CD8-positive, alpha-beta T cell (primary cell): ENCODE measurements at regions of chr10 and their contacts with region 1.

Region 1: DNA sequence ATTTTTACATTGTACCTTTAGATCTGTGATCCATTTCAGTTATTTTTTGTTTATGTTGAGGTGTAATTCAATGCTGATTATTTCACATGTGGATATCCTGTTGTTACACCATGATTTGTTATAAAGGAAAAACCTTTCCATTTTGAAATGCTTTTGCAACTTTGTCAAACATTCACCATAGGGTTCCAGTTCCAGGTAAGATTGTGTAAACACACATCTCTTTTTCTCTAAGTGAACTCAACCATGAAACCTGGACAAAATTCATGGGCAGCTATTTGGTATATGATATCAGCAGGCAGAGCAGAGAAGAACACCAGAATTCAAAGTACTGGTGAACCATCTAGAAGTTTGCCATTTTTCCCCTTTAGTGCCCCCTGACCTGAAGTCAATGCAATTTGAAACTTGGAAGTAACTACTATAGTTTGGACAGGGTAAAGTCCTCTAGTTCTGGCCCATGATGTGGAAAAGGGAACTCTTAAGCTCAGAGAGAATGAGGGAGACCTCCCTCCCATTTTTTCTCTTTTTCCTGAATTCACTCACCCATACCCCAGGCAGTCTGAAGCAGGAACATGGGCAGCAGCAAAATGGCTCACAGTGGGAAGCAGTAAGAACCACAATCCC is 446.1 kb downstream of the ATRNL1 start:
- DNase-seq: no peak
- ATAC-seq: no peak
- H3K4me3 ChIP-seq: no peak overlapping the region
- H3K4me3 Mint-ChIP-seq: no peak overlapping the region
- H3K27ac ChIP-seq: no peak overlapping the region
- H3K27ac Mint-ChIP-seq: no peak overlapping the region
- H3K4me1 ChIP-seq: no peaks in the 10 kb centered on the region
- H3K4me1 Mint-ChIP-seq: no peaks in the 10 kb centered on the region
- H3K27me3 ChIP-seq: no peaks in the 10 kb centered on the region
- H3K27me3 Mint-ChIP-seq: no peaks in the 10 kb centered on the region
- CTCF ChIP-seq: no peak

Region 2: GRCh38 chr10:115593060-115593459 is 53.8 kb after region 1 on chr10:
- CTCF ChIA-PET with region 1: no interaction called
- POLR2A ChIA-PET with region 1: no interaction called
- intact Hi-C with region 1: loop called in 1 of 2 experiments (anchors 2 kb)
- DNase-seq: no peak
- ATAC-seq: no peak
- H3K4me3 ChIP-seq: no peak overlapping the region
- H3K4me3 Mint-ChIP-seq: no peak overlapping the region
- H3K27ac ChIP-seq: no peak overlapping the region
- H3K27ac Mint-ChIP-seq: no peak overlapping the region
- H3K4me1 ChIP-seq: no peaks in the 10 kb centered on the region
- H3K4me1 Mint-ChIP-seq: no peaks in the 10 kb centered on the region
- H3K27me3 ChIP-seq: no peaks in the 10 kb centered on the region
- H3K27me3 Mint-ChIP-seq: no peaks in the 10 kb centered on the region
- CTCF ChIP-seq: no peak

Region 3: DNA sequence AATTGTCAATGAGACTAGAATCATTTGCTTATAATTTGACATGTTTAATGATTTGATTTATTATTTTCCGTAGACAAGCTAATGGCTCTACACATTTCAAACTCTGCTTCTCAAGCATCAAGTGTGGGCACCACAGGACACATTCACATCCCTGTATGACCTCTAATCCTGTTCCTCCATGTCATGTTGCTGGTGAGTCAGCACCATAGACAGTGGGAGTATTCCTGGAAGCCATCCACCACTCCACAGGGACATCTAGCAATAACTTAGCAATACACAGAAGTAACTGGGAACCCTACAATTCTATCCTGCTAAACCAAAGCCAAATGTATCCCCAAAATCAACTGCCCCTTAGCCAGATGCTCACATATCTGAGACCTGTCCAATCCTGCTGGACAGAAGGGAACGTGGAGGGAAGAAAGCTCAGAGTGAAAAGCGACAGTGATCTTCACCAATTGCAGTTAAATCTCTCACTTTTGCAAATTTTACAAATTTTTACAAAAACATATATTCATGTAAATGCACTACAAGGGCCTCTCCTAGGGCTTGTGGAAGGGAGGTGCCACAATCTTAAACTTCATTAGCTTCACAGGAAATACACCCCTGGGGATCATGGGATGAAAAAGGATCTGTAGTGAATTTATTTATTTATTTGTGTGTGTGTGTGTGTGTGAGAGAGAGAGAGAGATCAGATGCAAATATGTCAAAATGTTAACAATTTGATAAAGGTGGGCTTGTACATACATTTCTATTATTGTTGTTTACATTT is 607.3 kb after region 1 on chr10:
- CTCF ChIA-PET with region 1: no interaction called
- POLR2A ChIA-PET with region 1: no interaction called
- intact Hi-C with region 1: no loop called
- DNase-seq: no peak
- ATAC-seq: no peak
- H3K4me3 ChIP-seq: no peak overlapping the region
- H3K4me3 Mint-ChIP-seq: peak overlapping the region; percentile 66
- H3K27ac ChIP-seq: no peak overlapping the region
- H3K27ac Mint-ChIP-seq: no peak overlapping the region
- H3K4me1 ChIP-seq: no peaks in the 10 kb centered on the region
- H3K4me1 Mint-ChIP-seq: peaks cover 17% of the 10 kb centered on the region
- H3K27me3 ChIP-seq: no peaks in the 10 kb centered on the region
- H3K27me3 Mint-ChIP-seq: no peaks in the 10 kb centered on the region
- CTCF ChIP-seq: no peak